ENCODE measurements at regions of chr20 and their contacts with region 1.

Region 1: DNA sequence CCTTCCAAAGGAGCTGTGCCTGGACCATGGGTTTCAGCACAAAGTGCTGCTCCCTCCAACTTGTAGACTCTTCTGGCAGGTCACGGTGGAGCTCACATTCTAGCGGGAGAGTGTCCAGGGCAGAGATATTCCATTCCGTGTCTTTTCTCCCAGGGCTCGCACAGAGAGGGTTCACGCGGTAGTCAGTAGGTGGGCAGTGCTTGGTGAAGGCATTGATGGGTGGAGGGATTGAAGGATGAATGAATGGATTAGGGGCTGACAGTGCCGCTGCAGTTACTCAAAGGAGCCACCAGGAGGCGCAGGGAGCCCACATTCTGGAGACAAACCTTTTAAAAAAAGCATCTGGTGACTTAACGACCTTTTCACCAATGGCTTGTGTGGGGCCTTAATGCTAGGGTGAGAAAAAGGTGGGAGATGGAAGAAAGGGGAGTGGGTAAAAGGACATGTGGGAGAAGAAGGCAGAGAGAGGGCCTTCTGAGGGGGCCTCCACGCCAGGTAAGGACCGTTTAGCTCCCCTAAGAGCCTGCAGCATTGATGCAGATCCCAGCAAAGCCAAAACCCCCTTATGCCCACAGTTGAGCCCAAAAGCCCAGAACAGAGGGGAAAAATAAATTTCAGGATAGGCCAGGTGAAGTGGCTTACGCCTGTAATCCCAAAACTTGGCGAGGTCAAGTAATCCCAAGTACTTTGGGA is 17.5 kb upstream of the FAM110A start:
- DNase-seq: peak; percentile 82
- ATAC-seq: peak; percentile 20

Region 2: GRCh38 chr20:634556-634955 is 181.5 kb before region 1 on chr20:
- intact Hi-C with region 1: no loop called
- DNase-seq: no peak
- ATAC-seq: no peak

Region 3: GRCh38 chr20:884983-885952 is 69.2 kb after region 1 on chr20:
- intact Hi-C with region 1: no loop called
- DNase-seq: peak; percentile 87
- ATAC-seq: peak; percentile 65

Region 4: DNA sequence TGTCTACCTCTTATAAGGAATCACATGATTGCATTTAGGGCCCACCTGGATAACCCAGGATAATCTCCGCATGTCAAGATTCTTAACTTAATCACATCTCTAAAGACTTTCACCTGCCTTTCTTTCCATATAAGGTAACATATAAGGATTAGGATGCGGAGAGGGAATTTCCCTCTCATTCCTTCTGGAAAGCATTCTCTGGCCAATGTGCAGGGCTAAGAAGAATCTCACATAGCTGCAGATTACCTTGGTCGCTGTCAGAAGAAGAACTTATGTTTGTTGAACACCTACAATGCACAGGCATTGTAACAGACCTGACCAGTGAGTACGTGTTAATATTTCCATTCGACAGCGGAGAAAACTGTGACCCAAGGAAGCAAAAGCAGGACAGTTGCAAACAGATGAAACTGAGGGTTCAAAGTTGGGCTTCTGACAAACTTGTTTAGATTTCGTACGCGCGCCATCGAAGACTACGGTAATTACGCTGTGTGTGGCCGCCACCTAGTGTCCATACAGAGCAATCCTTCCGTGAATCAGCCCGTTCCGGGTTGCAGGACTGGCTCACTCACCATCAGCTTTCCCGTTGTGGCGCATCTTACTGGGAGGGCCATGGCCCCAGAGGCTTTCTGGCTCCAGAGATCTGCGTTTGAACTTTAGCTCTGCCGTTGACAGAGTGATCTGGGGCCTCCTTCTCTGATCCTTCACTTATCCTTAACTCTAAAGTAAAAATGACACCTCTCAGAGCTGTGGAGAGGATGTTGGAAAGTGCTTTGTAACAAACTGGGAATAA is 396.7 kb after region 1 on chr20:
- intact Hi-C with region 1: loop called (anchors 2 kb)
- DNase-seq: peak; percentile 80
- ATAC-seq: peak; percentile 83